ENCODE measurements at regions of chr14 and their contacts with region 1.

Region 1: DNA sequence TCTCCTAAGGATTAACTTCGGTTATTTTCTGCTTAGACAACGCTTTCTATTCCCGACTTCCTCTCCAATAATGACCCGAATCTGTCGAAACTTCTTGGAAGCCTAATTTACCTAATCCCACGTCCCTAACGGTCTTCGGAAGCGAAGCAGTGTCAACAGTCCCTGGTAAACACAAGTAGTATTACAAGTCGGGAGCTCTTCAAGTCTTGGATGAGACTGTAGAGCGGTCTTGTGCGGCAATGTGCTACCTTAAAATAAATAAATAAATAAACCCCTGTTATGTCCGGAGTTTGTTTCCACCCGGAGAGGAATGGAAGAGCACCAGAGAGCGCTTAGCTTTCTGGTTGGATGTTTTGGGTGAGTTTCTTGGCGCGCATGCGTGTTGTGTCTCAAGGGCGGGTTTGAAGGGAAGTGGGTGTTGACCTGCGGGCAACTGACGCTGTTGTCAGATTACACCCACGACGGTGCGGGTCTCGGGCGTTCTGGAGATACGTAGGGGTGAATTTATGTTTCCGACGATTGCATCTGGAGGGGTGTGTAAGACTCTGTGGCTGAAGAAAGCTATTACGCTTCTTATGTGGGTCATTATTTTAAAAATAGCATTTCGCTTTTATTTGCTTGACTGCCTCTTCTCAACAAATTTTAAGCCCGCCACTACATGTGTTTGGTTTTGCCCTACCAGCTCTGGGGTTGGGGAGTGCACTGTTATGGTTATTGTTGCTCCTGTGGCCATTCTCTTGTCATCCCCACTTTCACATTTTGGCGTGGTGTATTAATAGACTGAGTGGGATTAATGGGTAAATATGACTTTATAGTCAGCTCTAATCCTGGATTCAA is at the starts of genes KIAA0586 and TIMM9:
- DNase-seq: peak; percentile 85
- ATAC-seq: peak; percentile 93
- H3K4me3 Mint-ChIP-seq: peak within 1 kb of the TSS; percentile 94
- H3K27ac Mint-ChIP-seq: peak within 1 kb of the TSS; percentile 97
- H3K4me1 Mint-ChIP-seq: peaks cover 46% of the 10 kb centered on the region
- H3K27me3 Mint-ChIP-seq: no peaks in the 10 kb centered on the region
- CTCF ChIP-seq: no peak
- total RNA-seq, gene KIAA0586: 18.3 and 19.8 TPM in 2 replicates
- total RNA-seq, gene TIMM9: 29.1 and 35.7 TPM in 2 replicates

Region 2: GRCh38 chr14:57390028-57390805 is 1037.3 kb before region 1 on chr14 and contains the start of gene NAA30:
- CTCF ChIA-PET with region 1: no interaction called
- POLR2A ChIA-PET with region 1: no interaction called
- intact Hi-C with region 1: loop called (anchors 5 kb)
- DNase-seq: peak; percentile 89
- ATAC-seq: peak; percentile 96
- H3K4me3 Mint-ChIP-seq: peak within 1 kb of the TSS; percentile 88
- H3K27ac Mint-ChIP-seq: peak within 1 kb of the TSS; percentile 89
- H3K4me1 Mint-ChIP-seq: peaks cover 40% of the 10 kb centered on the region
- H3K27me3 Mint-ChIP-seq: peaks cover 1% of the 10 kb centered on the region
- CTCF ChIP-seq: no peak
- total RNA-seq, gene NAA30: 12.8 and 14.6 TPM in 2 replicates

Region 3: GRCh38 chr14:58239244-58240195 is 188.0 kb before region 1 on chr14:
- CTCF ChIA-PET with region 1: no interaction called
- POLR2A ChIA-PET with region 1: interaction called, 9 read pairs
- intact Hi-C with region 1: loop called (anchors 1 kb)
- DNase-seq: peak; percentile 63
- ATAC-seq: peak; percentile 10
- H3K4me3 Mint-ChIP-seq: no peak overlapping the region
- H3K27ac Mint-ChIP-seq: no peak overlapping the region
- H3K4me1 Mint-ChIP-seq: peaks cover 25% of the 10 kb centered on the region
- H3K27me3 Mint-ChIP-seq: peaks cover 2% of the 10 kb centered on the region
- CTCF ChIP-seq: no peak

Region 4: GRCh38 chr14:58331111-58331510 is 96.4 kb before region 1 on chr14:
- CTCF ChIA-PET with region 1: no interaction called
- POLR2A ChIA-PET with region 1: no interaction called
- intact Hi-C with region 1: loop called (anchors 1 kb)
- DNase-seq: peak; percentile 26
- ATAC-seq: peak; percentile 98
- H3K4me3 Mint-ChIP-seq: peak overlapping the region; percentile 28
- H3K27ac Mint-ChIP-seq: peak overlapping the region; percentile 81
- H3K4me1 Mint-ChIP-seq: peaks cover 13% of the 10 kb centered on the region
- H3K27me3 Mint-ChIP-seq: no peaks in the 10 kb centered on the region
- CTCF ChIP-seq: no peak

Region 5: DNA sequence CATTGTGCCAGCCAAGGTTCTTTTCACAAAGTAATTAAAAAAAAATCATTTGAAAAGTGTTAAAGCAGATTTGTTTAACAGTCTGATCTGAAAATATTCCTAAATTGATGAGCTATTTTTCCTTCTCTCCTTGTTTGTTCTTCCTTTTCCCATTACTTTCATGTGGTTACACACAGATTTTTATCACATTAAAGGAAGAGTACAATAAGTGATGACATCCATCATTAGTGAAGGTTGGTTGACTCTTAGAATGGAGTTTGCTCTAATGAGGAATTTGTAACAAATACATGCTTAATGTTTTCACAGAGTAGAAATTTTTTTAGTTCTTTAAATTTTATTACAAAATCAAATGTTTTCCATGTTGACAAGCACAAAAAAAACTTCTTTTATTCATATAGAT is 50.7 kb before region 1 on chr14:
- CTCF ChIA-PET with region 1: no interaction called
- POLR2A ChIA-PET with region 1: no interaction called
- intact Hi-C with region 1: no loop called
- DNase-seq: no peak
- ATAC-seq: no peak
- H3K4me3 Mint-ChIP-seq: no peak overlapping the region
- H3K27ac Mint-ChIP-seq: no peak overlapping the region
- H3K4me1 Mint-ChIP-seq: no peaks in the 10 kb centered on the region
- H3K27me3 Mint-ChIP-seq: no peaks in the 10 kb centered on the region
- CTCF ChIP-seq: no peak

Region 6: DNA sequence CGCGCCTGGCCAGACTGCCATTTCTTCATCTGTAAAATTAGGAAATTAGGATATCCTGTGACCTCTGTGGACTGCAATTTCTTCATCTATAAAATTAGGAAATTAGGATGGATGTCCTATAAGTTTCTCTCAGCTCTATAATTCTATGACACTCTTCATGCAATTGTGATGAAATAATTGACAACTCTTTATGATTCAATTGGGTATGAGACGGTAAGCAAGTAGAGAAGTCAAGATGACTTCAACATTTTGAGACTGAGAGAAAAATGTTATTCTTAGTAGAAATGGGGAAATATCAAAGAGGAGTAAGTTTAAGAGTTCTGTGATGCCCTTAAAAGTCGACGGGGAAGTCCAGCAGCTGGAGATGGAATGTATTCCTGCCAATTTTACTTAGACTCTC is 12.0 kb after region 1 on chr14:
- CTCF ChIA-PET with region 1: no interaction called
- POLR2A ChIA-PET with region 1: no interaction called
- intact Hi-C with region 1: no loop called
- DNase-seq: no peak
- ATAC-seq: no peak
- H3K4me3 Mint-ChIP-seq: no peak overlapping the region
- H3K27ac Mint-ChIP-seq: no peak overlapping the region
- H3K4me1 Mint-ChIP-seq: no peaks in the 10 kb centered on the region
- H3K27me3 Mint-ChIP-seq: no peaks in the 10 kb centered on the region
- CTCF ChIP-seq: no peak

Region 7: DNA sequence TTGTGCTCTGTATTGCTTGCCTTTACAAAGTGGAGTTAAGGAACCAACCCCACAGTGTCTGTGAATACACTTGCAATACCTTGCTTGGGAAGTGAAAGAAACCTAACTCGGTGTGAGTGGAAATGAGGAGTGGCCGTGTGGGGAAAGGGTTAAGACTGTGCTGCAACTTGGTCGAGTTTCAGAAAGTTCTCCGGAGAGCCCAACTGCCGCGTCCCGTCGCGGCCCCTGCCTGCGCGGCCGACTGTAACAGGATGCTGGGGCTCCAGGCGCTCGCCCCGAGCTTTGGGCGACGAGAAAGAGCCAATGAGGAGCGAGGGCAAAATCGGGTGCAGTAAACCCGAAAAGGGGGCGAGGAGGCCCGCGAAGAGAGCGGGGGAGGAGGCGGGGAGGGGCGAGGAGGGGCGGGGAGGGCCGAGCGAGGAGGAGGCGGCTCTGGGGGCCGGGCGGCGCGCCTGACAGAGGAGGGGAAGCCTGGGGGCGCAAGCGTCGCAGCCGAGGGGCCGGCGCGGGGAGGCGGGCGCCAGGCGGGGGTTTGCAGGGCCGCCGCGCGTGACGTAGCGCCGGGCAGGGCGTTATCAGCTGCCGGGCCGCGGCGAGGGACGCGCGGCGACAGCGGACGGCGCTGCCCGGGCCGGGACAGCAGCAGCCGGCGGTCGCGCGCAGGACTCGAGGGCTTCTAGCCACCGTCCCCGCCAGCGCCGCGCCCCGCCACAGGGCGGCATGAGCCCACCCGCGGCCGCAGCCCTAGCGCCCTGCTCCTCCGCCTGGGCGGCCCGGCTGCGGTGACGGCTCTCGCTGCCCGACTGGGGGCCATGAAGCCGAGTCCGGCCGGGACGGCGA is 210.1 kb after region 1 on chr14 and contains the start of gene DACT1:
- CTCF ChIA-PET with region 1: no interaction called
- POLR2A ChIA-PET with region 1: interaction called, 6 read pairs
- intact Hi-C with region 1: loop called (anchors 1 kb)
- DNase-seq: peak; percentile 52
- ATAC-seq: peak; percentile 80
- H3K4me3 Mint-ChIP-seq: peak within 1 kb of the TSS; percentile 94
- H3K27ac Mint-ChIP-seq: peak within 1 kb of the TSS; percentile 90
- H3K4me1 Mint-ChIP-seq: peaks cover 46% of the 10 kb centered on the region
- H3K27me3 Mint-ChIP-seq: peaks cover 17% of the 10 kb centered on the region
- CTCF ChIP-seq: no peak
- total RNA-seq, gene DACT1: 3.0 and 3.5 TPM in 2 replicates

Region 8: GRCh38 chr14:58749066-58749669 is 321.7 kb after region 1 on chr14:
- CTCF ChIA-PET with region 1: no interaction called
- POLR2A ChIA-PET with region 1: no interaction called
- intact Hi-C with region 1: no loop called
- DNase-seq: no peak
- ATAC-seq: no peak
- H3K4me3 Mint-ChIP-seq: no peak overlapping the region
- H3K27ac Mint-ChIP-seq: no peak overlapping the region
- H3K4me1 Mint-ChIP-seq: peaks cover 16% of the 10 kb centered on the region
- H3K27me3 Mint-ChIP-seq: no peaks in the 10 kb centered on the region
- CTCF ChIP-seq: no peak